Head of caudate nucleus (tissue), 42 donors: ENCODE measurements at regions of chr19 and their contacts with region 1.

Region 1: DNA sequence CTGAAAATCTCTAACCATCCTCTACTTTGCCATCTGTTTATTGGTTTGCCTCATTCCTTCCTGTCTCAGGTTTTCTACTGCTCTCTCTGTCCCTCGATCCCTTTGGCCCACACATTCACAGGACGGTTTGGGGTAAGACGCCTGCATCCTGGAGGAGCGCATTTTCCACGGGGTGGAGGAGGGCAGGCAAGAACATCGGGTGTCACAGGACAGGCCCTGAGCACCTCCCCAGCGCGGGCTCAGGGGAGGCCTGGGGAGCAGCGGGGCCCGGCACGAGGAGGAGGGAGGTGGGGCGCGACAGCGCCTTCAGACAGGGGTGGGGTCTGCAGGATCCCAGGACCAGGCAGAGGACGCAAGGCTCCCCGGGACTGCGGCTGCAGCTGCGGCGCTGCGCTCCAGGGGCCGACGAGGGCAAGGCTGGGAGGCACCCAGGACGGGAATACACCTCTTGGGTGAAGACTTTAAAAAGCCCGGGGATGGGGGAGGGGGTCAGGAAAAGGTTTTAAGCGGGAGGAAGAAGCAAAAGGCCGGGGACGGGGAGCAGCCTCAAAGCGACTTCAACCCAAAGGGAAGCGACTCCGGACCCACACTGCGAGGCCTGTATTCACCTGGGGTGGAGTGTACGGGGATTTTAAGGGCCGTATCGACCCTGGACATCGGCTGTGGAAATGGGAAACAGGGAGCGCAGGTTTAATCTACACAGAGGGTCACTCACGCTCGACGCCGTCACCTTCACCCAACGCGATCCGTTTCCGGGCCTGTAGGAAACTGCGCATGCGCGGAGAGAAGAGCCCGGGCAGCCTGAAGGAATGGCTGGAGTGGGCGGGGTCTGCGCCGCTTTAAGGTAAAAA is at the start of gene ZNF415:
- DNase-seq: peak; percentile 78 to 95 (median 88)

Region 2: GRCh38 chr19:53076977-53077376 is 55.4 kb before region 1 on chr19:
- intact Hi-C with region 1: loop called (anchors 10 kb)
- DNase-seq: peak; percentile 41 to 91 (median 77)

Region 3: DNA sequence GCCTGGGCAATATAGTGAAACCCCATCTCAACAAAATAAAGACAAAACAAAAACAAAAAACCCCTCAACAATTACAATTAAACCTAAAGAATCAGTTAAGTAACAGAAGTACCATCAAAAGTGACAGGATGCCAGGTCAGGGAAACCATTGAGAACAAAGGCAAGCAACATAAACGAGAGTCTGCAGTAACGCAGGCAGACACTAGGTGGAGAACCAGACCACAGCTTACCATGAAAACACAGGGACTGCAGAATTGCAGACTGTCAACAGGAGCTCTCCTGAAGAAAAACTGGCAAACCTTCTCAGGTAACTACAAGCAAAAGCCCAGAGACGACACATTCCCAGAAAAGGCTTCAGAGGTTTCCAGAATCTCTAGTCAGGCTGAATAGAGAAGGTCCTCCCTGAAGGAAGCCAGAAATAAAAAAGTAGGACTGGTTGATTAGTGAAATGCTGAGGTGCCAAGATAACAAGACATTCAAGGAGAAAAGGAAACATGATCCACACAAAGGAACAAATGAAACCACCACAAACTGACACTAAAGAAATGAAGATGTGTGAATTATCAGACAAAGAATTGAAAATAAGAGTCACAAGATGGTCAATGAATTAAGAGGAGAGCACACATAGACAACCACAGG is 63.0 kb after region 1 on chr19:
- intact Hi-C with region 1: no loop called
- DNase-seq: peak; percentile 36 to 93 (median 82)